ENCODE measurements at regions of chr19 and their contacts with region 1.

Region 1: DNA sequence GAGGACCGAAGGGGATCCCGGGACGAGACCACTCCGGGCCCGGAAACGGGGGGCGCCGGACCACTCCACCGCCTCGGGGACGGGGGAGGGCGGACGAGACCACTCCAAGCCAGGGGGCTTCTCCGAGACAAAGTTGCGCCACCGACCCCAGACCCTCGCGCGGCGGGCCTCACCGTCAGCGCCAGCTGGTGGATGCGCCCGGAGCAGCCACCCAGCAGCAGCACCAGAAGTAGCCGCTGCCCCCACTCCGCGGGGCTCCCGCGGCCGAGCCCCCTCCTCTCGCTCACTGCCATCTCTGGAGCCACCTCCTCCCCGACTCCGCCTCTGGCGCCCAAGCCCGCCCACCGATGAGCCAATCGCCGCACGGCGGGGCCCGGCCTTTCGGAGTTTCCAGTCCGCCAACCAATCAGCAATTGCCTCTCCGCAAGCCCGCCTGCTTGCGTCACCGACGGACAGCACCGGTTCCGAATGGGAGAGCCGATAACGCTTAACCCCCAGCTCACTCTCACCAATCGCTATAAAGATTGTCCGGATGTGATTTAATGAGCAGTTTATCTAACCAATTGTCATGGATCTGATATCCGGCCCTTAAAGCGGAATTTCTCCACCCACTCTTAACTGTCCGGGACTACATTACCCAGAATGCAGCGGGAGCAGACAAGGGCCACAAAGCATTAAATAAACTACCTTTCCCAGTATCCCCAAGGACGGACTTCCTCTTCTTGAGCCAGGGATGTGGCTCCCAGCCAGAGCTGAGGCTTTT is at the start of gene GPR108:
- DNase-seq: peak; percentile 96 to 98
- H3K4me3 ChIP-seq: peak within 1 kb of the TSS; percentile 82
- H3K27ac ChIP-seq: peak within 1 kb of the TSS; percentile 81
- H3K4me1 ChIP-seq: peaks cover 28% of the 10 kb centered on the region
- H3K27me3 ChIP-seq: no peaks in the 10 kb centered on the region
- CTCF ChIP-seq: no peak
- total RNA-seq, gene GPR108: 58.3 and 66.8 TPM in 2 replicates

Region 2: DNA sequence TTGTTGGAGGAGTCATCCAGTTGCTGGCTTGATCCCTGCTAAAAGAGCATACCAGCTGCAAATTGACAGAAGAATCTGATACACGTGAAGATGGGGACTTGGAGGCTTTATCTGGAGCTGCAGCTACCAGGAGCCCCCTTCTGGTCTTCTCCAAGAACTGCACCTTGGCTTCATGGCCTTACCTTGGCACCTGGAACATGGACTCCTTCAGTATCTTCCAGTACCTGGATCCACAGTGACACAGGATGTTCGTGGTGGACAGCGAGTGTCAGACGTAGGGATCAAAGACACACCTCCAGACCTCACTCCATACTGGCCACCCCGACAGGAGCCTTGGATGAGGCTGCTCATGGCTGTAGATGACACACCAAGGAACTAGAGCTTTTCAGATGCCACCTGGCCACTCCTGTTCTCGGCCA is 611.9 kb before region 1 on chr19:
- CTCF ChIA-PET with region 1: interaction called, 3 read pairs
- POLR2A ChIA-PET with region 1: no interaction called
- intact Hi-C with region 1: loop called (anchors 5 kb)
- DNase-seq: peak; percentile 52 to 61
- H3K4me3 ChIP-seq: no peak overlapping the region
- H3K27ac ChIP-seq: no peak overlapping the region
- H3K4me1 ChIP-seq: no peaks in the 10 kb centered on the region
- H3K27me3 ChIP-seq: no peaks in the 10 kb centered on the region
- CTCF ChIP-seq: peak; percentile 94

Region 3: DNA sequence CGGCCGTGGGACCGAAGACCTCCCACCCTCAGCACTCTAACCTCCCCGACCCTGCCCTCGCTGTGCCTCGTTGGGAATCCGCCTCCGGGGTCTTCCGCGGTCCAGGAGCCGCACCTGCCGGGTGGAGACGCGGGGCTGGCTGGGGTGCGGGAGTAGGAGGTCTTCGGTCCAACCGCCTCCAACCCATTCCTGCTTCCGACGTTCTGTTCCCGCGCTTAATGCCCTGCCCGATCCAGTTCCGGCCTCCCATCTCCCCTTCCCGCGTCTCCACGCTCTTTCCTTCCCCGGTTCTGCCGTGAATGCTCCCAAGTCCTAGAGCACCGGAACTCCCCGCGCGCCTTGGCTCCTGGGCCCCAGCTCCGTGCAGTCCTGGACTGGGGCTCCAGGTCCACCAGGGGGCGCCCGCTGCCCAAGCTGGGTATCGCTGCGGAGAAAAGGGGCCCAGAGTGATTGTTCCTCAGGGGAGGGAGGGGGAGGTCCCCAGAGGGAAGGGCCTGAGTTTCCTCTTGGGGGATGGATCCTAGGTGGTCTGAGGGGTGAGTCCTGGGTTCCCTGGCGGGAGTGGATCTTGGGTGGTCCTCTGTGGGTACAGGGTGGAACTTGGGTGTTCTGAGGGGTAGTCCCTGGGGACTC is 220.7 kb before region 1 on chr19:
- CTCF ChIA-PET with region 1: no interaction called
- POLR2A ChIA-PET with region 1: interaction called, 4 read pairs
- intact Hi-C with region 1: loop called (anchors 1 kb)
- DNase-seq: peak; percentile 43 to 76
- H3K4me3 ChIP-seq: peak overlapping the region; percentile 57
- H3K27ac ChIP-seq: no peak overlapping the region
- H3K4me1 ChIP-seq: no peaks in the 10 kb centered on the region
- H3K27me3 ChIP-seq: no peaks in the 10 kb centered on the region
- CTCF ChIP-seq: peak; percentile 93

Region 4: DNA sequence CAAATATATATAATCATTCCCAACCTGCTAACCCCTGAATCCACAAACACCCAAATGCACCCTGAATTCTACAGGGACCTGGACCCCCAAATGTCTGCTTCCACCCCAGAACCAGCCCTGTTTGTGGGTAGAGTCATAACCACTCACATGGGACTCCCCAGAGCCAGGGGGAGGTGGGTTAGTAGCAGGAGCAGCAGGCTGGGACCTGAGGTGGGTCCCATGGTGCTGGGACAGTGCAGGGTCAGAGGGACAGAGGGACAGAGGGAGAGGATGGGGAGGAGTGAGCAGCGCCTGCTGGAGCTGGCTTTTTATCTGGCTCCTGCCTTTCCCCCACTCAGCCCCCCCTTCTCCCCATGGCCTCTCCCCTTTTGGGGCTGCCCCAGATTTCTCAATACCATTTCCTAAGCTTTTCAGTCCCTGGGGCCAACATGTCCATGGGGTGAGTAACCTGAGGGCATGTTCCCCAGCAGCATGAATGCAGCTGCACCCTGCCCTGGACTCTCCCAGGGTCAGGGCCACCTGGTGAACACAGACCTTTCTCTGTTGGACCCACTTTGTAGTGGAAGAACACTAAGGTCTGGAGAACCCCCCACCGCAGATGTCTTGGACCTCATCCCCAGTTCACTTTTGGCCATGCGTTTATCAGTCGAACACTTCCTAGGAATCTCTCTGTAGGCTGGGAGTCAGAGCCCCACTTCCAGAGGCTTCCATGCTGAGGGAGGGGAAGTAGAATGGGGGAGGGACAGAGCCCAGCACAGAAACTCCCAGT is 16.9 kb before region 1 on chr19 and contains the start of gene C3:
- CTCF ChIA-PET with region 1: interaction called, 12 read pairs
- POLR2A ChIA-PET with region 1: interaction called, 4 read pairs
- intact Hi-C with region 1: no loop called
- DNase-seq: peak; percentile 69 to 88
- H3K4me3 ChIP-seq: peak within 1 kb of the TSS; percentile 64
- H3K27ac ChIP-seq: peak within 1 kb of the TSS; percentile 77
- H3K4me1 ChIP-seq: peaks cover 47% of the 10 kb centered on the region
- H3K27me3 ChIP-seq: no peaks in the 10 kb centered on the region
- CTCF ChIP-seq: no peak
- total RNA-seq, gene C3: 130 and 132 TPM in 2 replicates

Region 5: GRCh38 chr19:6801485-6802086 is 64.1 kb after region 1 on chr19:
- CTCF ChIA-PET with region 1: interaction called, 3 read pairs
- POLR2A ChIA-PET with region 1: interaction called, 8 read pairs
- intact Hi-C with region 1: loop called (anchors 1 kb)
- DNase-seq: peak; percentile 62 to 66
- H3K4me3 ChIP-seq: peak overlapping the region; percentile 57
- H3K27ac ChIP-seq: peak overlapping the region; percentile 96
- H3K4me1 ChIP-seq: peaks cover 24% of the 10 kb centered on the region
- H3K27me3 ChIP-seq: no peaks in the 10 kb centered on the region
- CTCF ChIP-seq: no peak

Measured in PC-9 (cell line).